Naive thymus-derived CD4-positive, alpha-beta T cell (primary cell): ENCODE measurements at regions of chr10 and their contacts with region 1.

Region 1: DNA sequence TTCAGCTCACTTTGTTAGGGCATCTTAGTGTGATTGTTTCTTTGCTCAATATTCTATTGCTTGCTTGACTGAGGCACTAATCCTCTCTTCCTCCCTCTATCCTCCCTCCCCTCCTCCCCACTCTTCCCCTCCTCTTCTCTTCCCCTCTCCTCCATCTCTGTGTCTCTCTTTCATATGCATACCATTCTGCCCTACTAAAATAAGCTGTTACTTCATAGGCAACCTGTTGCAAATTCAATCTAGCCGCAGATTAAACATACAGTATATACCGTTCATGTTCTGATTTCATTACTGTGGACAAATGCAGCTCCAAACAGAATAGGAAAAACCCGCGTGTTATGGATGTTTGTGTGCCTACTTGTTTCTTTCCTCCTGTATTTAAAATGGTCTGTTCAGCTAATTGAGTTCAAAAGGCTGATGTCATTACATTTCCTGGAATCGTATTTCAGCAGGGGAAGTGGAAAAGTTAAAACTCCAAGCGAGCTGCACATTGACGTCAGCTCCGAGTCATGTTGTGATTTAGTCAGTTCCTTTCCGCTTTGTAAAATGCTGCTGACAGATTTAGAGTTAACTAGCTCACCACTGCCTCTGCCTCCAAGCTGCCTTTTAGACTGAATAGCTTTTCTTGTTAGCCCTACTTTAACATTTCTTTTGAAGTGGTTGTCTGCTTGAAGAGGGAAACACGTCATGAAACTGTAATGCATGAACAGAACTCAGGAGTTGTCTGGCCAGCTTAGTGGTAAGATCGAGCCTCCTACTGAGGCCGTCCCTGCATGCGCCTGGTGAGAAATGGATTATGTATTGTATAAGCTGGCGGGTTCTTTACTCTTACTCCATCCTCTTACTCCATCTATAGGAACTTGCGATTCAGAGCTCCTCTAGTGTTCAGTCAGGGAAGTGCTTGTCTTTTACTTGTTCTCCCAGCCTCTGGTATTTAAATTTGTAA is 69.0 kb downstream of the CREM start:
- DNase-seq: peak; percentile 47 to 97 (median 93)
- ATAC-seq: peak; percentile 91
- H3K4me3 ChIP-seq: peak overlapping the region; percentile 65
- H3K4me3 Mint-ChIP-seq: peak overlapping the region; percentile 78 to 95 (median 85)
- H3K27ac ChIP-seq: peak overlapping the region; percentile 98
- H3K27ac Mint-ChIP-seq: peak overlapping the region; percentile 96 to 100 (median 99)
- H3K4me1 ChIP-seq: peaks cover 5 to 7% of the 10 kb centered on the region in 2 donors
- H3K4me1 Mint-ChIP-seq: peaks cover 0 to 56% (median 21%) of the 10 kb centered on the region in 7 donors
- H3K27me3 ChIP-seq: no peaks in the 10 kb centered on the region
- H3K27me3 Mint-ChIP-seq: no peaks in the 10 kb centered on the region

Region 2: GRCh38 chr10:34994565-34995142 is 201.0 kb before region 1 on chr10:
- CTCF ChIA-PET with region 1: interaction called, 5 read pairs
- POLR2A ChIA-PET with region 1: interaction called, 3 read pairs
- intact Hi-C with region 1: loop called (anchors 1 to 2 kb)
- DNase-seq: peak in 8 of 9 donors; percentile 18 to 78 (median 50)
- ATAC-seq: peak; percentile 71
- H3K4me3 ChIP-seq: no peak overlapping the region
- H3K4me3 Mint-ChIP-seq: no peak overlapping the region
- H3K27ac ChIP-seq: no peak overlapping the region
- H3K27ac Mint-ChIP-seq: peak overlapping the region in 6 of 9 donors; percentile 28 to 83 (median 56)
- H3K4me1 ChIP-seq: peaks cover 0 to 8% of the 10 kb centered on the region in 2 donors
- H3K4me1 Mint-ChIP-seq: peaks cover 0 to 17% (median 10%) of the 10 kb centered on the region in 7 donors
- H3K27me3 ChIP-seq: no peaks in the 10 kb centered on the region
- H3K27me3 Mint-ChIP-seq: no peaks in the 10 kb centered on the region

Region 3: DNA sequence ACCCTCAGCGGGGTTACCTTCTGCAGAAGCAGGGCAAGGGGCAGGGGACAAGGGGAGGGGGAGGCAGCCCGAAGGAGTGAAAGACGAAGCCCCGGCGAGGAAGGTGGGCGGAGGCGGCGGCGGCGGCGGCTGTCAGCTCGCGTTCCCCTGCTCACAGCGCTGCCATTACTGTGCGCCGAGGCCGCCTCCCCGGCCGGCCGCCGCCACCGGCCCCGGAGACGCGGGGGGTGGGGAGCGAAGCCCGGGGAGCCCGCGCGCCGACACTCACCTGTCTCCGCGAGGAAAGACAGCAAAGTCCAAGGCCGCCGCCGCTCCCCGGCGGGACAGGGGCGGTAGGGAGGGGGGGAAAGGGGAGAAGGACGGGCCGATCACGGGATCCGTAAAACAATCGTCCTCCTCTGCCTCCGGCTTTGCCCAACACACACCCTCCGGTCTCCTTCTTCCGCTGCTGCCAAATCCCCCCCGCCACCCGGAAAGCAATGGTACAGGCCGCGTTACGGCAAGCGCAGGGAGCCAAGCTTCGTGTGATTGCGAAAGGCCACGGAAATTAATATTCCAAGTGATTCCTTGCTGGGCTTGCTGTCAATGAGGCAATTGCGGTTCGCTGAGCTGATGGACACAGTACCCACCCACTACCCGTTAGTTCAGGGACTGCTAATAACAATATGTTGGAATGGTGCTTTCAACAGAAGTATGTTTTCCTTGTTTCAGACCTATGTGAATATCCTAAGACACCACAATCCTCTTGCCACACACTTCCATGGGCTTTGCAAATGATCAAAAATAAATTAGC is 105.3 kb before region 1 on chr10 and contains the start of gene CUL2:
- CTCF ChIA-PET with region 1: no interaction called
- POLR2A ChIA-PET with region 1: interaction called, 17 read pairs
- intact Hi-C with region 1: loop called (anchors 1 kb)
- DNase-seq: peak; percentile 85 to 98 (median 94)
- ATAC-seq: peak; percentile 96
- H3K4me3 ChIP-seq: peak within 1 kb of the TSS; percentile 65
- H3K4me3 Mint-ChIP-seq: peak within 1 kb of the TSS; percentile 84 to 99 (median 94)
- H3K27ac ChIP-seq: peak within 1 kb of the TSS; percentile 98
- H3K27ac Mint-ChIP-seq: peak within 1 kb of the TSS; percentile 91 to 99 (median 97)
- H3K4me1 ChIP-seq: peaks cover 35 to 41% of the 10 kb centered on the region in 2 donors
- H3K4me1 Mint-ChIP-seq: peaks cover 31 to 55% (median 52%) of the 10 kb centered on the region in 7 donors
- H3K27me3 ChIP-seq: no peaks in the 10 kb centered on the region
- H3K27me3 Mint-ChIP-seq: peaks cover 0 to 8% (median 0%) of the 10 kb centered on the region in 5 donors
- total RNA-seq, gene CUL2: 30.9 to 43.7 (median 36.0) TPM

Region 4: GRCh38 chr10:35126530-35127296 is 68.9 kb before region 1 on chr10 and contains the start of gene CREM:
- CTCF ChIA-PET with region 1: interaction called, 62 read pairs
- POLR2A ChIA-PET with region 1: interaction called, 80 read pairs
- intact Hi-C with region 1: loop called (anchors 1 kb)
- DNase-seq: peak; percentile 98 to 100 (median 99)
- ATAC-seq: peak; percentile 90
- H3K4me3 ChIP-seq: peak within 1 kb of the TSS; percentile 84
- H3K4me3 Mint-ChIP-seq: peak within 1 kb of the TSS; percentile 63 to 93 (median 91)
- H3K27ac ChIP-seq: peak within 1 kb of the TSS; percentile 100
- H3K27ac Mint-ChIP-seq: peak within 1 kb of the TSS; percentile 85 to 99 (median 95)
- H3K4me1 ChIP-seq: peaks cover 17 to 20% of the 10 kb centered on the region in 2 donors
- H3K4me1 Mint-ChIP-seq: peaks cover 16 to 61% (median 47%) of the 10 kb centered on the region in 7 donors
- H3K27me3 ChIP-seq: no peaks in the 10 kb centered on the region
- H3K27me3 Mint-ChIP-seq: no peaks in the 10 kb centered on the region
- total RNA-seq, gene CREM: 13.3 to 76.2 (median 31.6) TPM

Region 5: DNA sequence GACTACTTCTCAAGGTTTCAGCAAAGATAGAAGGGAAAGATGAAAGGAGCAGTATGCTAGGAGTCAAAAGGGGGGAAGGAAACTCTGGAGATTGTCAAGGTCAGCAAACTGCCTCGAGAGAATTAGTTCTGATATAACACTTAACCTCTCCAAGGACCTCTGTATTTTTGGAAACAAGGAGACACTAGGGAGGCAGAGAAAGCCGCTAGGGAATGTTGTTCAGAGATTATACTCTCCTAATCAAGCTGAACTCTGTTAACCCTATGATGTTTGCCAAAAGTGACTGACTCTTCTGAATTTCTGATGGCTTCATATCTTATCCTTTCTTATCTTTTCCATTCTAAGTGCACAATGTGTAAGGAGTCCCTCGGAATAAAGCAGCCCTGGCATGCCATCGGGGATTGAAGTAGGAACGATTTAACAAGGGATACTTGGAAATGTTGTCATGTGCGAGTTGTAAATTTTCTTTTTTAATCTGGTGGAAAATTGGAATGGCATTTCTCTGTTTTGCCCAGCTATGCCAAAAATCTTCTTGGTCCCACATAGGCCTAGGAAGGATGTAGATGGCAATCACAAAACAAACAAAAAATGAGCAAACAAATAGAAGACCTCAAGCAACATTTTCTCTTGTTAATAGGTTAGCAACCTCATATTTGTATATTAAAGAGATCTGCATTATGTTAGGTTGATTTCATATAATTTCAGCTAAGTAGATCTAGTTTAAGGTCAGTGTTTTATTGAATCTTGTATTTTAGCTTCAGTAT is 41.7 kb before region 1 on chr10:
- CTCF ChIA-PET with region 1: interaction called, 4 read pairs
- POLR2A ChIA-PET with region 1: interaction called, 11 read pairs
- intact Hi-C with region 1: loop called (anchors 1 to 2 kb)
- DNase-seq: no peak
- ATAC-seq: no peak
- H3K4me3 ChIP-seq: no peak overlapping the region
- H3K4me3 Mint-ChIP-seq: no peak overlapping the region
- H3K27ac ChIP-seq: no peak overlapping the region
- H3K27ac Mint-ChIP-seq: no peak overlapping the region
- H3K4me1 ChIP-seq: peaks cover 9 to 14% of the 10 kb centered on the region in 2 donors
- H3K4me1 Mint-ChIP-seq: peaks cover 17 to 36% (median 21%) of the 10 kb centered on the region in 7 donors
- H3K27me3 ChIP-seq: no peaks in the 10 kb centered on the region
- H3K27me3 Mint-ChIP-seq: no peaks in the 10 kb centered on the region

Region 6: GRCh38 chr10:35218339-35218955 is 22.8 kb after region 1 on chr10:
- CTCF ChIA-PET with region 1: interaction called, 9 read pairs
- POLR2A ChIA-PET with region 1: interaction called, 8 read pairs
- intact Hi-C with region 1: loop called (anchors 1 kb)
- DNase-seq: peak; percentile 58 to 83 (median 76)
- ATAC-seq: peak; percentile 94
- H3K4me3 ChIP-seq: no peak overlapping the region
- H3K4me3 Mint-ChIP-seq: peak overlapping the region in 8 of 10 donors; percentile 33 to 79 (median 62)
- H3K27ac ChIP-seq: no peak overlapping the region
- H3K27ac Mint-ChIP-seq: peak overlapping the region; percentile 16 to 96 (median 77)
- H3K4me1 ChIP-seq: no peaks in the 10 kb centered on the region
- H3K4me1 Mint-ChIP-seq: peaks cover 5 to 47% (median 10%) of the 10 kb centered on the region in 7 donors
- H3K27me3 ChIP-seq: no peaks in the 10 kb centered on the region
- H3K27me3 Mint-ChIP-seq: no peaks in the 10 kb centered on the region

Region 7: GRCh38 chr10:35318551-35318950 is 122.9 kb after region 1 on chr10:
- CTCF ChIA-PET with region 1: no interaction called
- POLR2A ChIA-PET with region 1: no interaction called
- intact Hi-C with region 1: no loop called
- DNase-seq: no peak
- ATAC-seq: no peak
- H3K4me3 ChIP-seq: no peak overlapping the region
- H3K4me3 Mint-ChIP-seq: no peak overlapping the region
- H3K27ac ChIP-seq: no peak overlapping the region
- H3K27ac Mint-ChIP-seq: peak overlapping the region in 1 of 9 donors; percentile 32
- H3K4me1 ChIP-seq: no peaks in the 10 kb centered on the region
- H3K4me1 Mint-ChIP-seq: peaks cover 0 to 22% (median 12%) of the 10 kb centered on the region in 7 donors
- H3K27me3 ChIP-seq: no peaks in the 10 kb centered on the region
- H3K27me3 Mint-ChIP-seq: no peaks in the 10 kb centered on the region

Region 8: DNA sequence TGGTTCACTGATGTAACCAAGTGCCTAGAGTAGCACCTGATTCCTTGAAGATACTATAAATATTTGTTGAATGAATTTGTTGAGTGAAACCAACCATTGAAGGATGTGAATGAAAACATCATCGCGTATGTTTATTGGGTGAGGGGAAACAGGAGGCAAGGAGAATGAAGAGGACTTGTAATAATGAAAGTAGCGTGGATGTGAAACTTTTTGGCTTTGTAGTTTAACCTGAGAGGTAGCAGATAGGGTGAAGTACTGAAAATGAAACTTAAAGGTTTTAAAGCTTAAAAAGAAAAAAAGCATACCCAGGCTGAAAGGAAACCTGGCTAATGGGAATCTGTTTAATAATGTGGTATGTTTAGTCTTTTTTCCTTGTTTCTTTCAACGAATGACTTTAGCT is 145.9 kb after region 1 on chr10:
- CTCF ChIA-PET with region 1: no interaction called
- POLR2A ChIA-PET with region 1: no interaction called
- intact Hi-C with region 1: loop called (anchors 1 kb)
- DNase-seq: peak in 7 of 9 donors; percentile 26 to 70 (median 60)
- ATAC-seq: peak; percentile 73
- H3K4me3 ChIP-seq: peak overlapping the region; percentile 36
- H3K4me3 Mint-ChIP-seq: peak overlapping the region in 9 of 10 donors; percentile 23 to 85 (median 69)
- H3K27ac ChIP-seq: peak overlapping the region; percentile 42
- H3K27ac Mint-ChIP-seq: peak overlapping the region; percentile 1 to 83 (median 73)
- H3K4me1 ChIP-seq: peaks cover 33 to 34% of the 10 kb centered on the region in 2 donors
- H3K4me1 Mint-ChIP-seq: peaks cover 57 to 83% (median 76%) of the 10 kb centered on the region in 7 donors
- H3K27me3 ChIP-seq: no peaks in the 10 kb centered on the region
- H3K27me3 Mint-ChIP-seq: no peaks in the 10 kb centered on the region

Region 9: GRCh38 chr10:35533565-35533964 is 337.9 kb after region 1 on chr10:
- CTCF ChIA-PET with region 1: no interaction called
- POLR2A ChIA-PET with region 1: no interaction called
- intact Hi-C with region 1: no loop called
- DNase-seq: no peak
- ATAC-seq: no peak
- H3K4me3 ChIP-seq: no peak overlapping the region
- H3K4me3 Mint-ChIP-seq: no peak overlapping the region
- H3K27ac ChIP-seq: no peak overlapping the region
- H3K27ac Mint-ChIP-seq: peak overlapping the region in 2 of 9 donors; percentile 13 to 23
- H3K4me1 ChIP-seq: no peaks in the 10 kb centered on the region
- H3K4me1 Mint-ChIP-seq: peaks cover 5 to 23% (median 14%) of the 10 kb centered on the region in 7 donors
- H3K27me3 ChIP-seq: no peaks in the 10 kb centered on the region
- H3K27me3 Mint-ChIP-seq: no peaks in the 10 kb centered on the region